Pancreas (tissue), 10 donors: ENCODE measurements at regions of chr22 and their contacts with region 1.

Region 1: DNA sequence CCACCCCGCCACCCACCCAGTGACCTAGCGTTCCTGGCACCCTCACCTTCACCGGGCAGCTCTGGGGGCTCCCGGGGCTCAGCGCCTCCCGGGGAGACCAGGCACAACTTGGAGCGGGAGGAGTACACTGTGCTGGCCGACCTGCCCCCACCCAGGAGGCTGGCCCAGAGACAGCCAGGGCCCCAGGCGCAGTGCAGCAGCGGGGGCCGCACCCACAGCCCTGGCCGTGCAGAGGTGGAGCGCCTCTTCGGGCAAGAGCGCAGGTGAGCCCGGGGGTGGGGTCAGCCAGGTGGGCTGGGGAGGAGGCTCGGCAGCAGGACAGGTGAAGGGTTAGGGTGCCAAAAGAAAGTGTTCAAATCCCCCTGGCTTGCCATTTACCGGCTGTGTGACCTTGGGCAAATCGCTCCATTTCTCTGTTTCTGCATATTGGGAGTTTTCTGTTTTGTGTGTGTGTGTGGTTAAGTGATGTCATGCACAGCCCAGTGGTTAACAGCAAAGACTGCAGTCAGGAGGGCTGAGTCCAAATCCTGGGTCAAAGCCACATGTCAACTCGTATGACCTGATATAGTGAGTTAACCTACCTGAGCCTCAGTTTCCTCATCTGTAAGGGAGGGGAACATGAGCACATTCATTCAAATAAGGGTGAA is 29.5 kb downstream of the TRIOBP start:
- DNase-seq: no peak
- ATAC-seq: no peak
- H3K4me3 ChIP-seq: no peak overlapping the region
- H3K27ac ChIP-seq: no peak overlapping the region
- H3K4me1 ChIP-seq: peaks cover 5 to 17% (median 6%) of the 10 kb centered on the region in 3 donors
- H3K27me3 ChIP-seq: no peaks in the 10 kb centered on the region
- CTCF ChIP-seq: no peak

Region 2: DNA sequence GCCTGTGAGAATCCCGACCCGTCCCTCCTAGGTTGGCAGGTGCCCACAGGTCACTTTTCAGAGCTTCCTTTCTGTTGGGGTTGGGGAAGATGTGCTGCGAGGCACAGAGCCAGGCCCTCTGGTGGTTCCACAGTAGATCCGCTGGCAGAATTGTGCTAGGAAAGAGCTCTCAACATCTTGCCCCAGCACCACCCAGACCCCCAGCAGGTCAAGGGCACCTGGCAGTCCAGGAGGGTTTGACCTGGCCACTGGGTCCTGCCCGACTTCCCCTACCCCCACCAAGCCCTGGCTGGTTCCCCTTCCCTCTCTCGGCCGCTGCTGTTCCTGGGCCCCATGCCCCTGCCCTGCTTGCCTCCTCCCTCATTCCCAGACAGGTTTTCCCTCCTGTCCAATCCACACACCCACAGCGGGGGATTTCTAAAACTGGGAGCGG is 55.1 kb after region 1 on chr22:
- intact Hi-C with region 1: loop called in 1 of 3 experiments (anchors 10 kb)
- DNase-seq: no peak
- ATAC-seq: no peak
- H3K4me3 ChIP-seq: no peak overlapping the region
- H3K27ac ChIP-seq: no peak overlapping the region
- H3K4me1 ChIP-seq: peaks cover 0 to 7% (median 4%) of the 10 kb centered on the region in 3 donors
- H3K27me3 ChIP-seq: no peaks in the 10 kb centered on the region
- CTCF ChIP-seq: no peak